ENCODE measurements at regions of chr1 and their contacts with region 1.

Region 1: DNA sequence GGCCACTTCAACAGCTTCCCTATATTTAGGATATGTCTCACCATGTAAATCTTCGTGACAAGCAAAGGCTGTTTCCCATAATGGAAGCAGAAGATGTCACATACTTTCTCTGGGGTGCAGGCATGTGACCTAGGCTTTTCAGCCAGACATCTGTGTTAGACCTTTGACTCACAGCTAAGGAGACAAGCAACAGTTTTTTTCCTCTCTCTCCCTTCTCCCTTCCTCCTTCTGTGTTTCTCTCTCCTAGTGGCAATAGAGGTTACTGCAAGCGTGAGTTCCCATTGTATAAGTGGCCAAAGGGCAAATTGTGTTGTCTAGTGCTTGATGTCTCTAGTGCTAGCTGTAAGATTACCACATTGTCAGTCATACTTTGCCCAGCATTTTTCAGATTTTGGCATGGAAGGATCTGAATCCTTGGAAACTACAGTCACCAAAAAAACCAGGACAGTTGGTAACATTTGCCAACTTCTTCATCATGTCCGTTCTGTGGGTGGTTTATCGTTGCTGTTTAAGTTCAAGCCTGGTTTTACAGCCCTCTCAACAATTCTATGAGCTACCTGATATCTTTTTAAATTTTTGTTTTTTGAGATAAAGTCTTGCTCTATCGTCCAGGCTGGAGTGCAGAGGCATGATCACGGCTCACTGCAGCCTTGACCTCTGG is 44.4 kb upstream of the RABGAP1L start:
- DNase-seq: peak; percentile 25
- H3K4me3 ChIP-seq: no peak overlapping the region; a peak in 1 of 4 replicates
- H3K27ac ChIP-seq: no peak overlapping the region
- H3K4me1 ChIP-seq: no peaks in the 10 kb centered on the region; a peak in 1 of 4 replicates
- H3K27me3 ChIP-seq: no peaks in the 10 kb centered on the region
- CTCF ChIP-seq: peak; percentile 69
- EP300 ChIP-seq: no peak
- RAD21 ChIP-seq: peak; percentile 18; the same call in 1 of the 2 replicates

Region 2: GRCh38 chr1:173768206-173768605 is 346.7 kb before region 1 on chr1:
- CTCF ChIA-PET with region 1: no interaction called
- POLR2A ChIA-PET with region 1: no interaction called
- DNase-seq: no peak
- H3K4me3 ChIP-seq: no peak overlapping the region
- H3K27ac ChIP-seq: no peak overlapping the region
- H3K4me1 ChIP-seq: no peaks in the 10 kb centered on the region
- H3K27me3 ChIP-seq: no peaks in the 10 kb centered on the region
- CTCF ChIP-seq: no peak
- EP300 ChIP-seq: no peak
- RAD21 ChIP-seq: no peak

Region 3: DNA sequence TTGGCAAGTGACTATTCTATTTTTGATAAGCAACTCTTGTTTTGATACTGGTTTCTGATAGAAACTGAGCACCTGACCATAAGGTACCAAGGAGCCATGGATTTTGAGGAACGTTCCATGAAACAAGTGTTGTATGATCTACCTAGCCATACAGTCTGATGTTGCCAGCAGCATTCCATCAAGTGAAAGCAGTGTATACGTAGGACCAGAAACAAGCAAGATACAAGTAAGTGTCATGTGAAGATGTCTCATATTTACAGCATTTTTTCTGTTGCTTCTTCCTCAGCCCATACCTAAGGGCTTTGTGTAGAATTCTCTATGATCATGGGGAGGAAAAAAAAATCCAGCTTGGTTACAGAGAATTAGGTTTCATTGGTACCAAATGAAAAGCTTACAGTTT is 11.2 kb before region 1 on chr1:
- CTCF ChIA-PET with region 1: interaction called, 11 read pairs
- POLR2A ChIA-PET with region 1: no interaction called
- DNase-seq: no peak
- H3K4me3 ChIP-seq: no peak overlapping the region
- H3K27ac ChIP-seq: no peak overlapping the region
- H3K4me1 ChIP-seq: no peaks in the 10 kb centered on the region
- H3K27me3 ChIP-seq: no peaks in the 10 kb centered on the region; the same call in 1 of the 2 replicates
- CTCF ChIP-seq: no peak
- EP300 ChIP-seq: no peak
- RAD21 ChIP-seq: no peak

Region 4: DNA sequence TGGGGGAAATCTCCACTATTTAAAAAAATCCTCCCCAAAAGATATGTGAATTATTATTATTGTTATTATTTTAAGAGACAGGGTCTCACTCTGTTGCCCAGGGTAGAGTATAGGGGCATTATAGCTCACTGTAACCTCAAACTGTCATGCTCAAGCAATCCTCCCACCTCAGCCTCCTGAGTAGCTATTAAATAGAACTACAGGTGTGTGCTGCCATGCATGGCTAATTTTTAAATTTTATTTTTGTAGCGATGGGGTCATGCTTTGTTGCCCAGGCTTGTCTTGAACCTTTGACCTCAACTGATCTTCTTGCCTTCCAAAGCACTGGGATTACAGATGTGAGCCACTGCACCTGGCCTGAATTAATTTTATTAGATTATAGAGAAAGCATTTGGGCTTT is 161.2 kb after region 1 on chr1:
- CTCF ChIA-PET with region 1: no interaction called
- POLR2A ChIA-PET with region 1: no interaction called
- DNase-seq: no peak
- H3K4me3 ChIP-seq: no peak overlapping the region
- H3K27ac ChIP-seq: no peak overlapping the region
- H3K4me1 ChIP-seq: no peaks in the 10 kb centered on the region
- H3K27me3 ChIP-seq: no peaks in the 10 kb centered on the region
- CTCF ChIP-seq: no peak
- EP300 ChIP-seq: no peak
- RAD21 ChIP-seq: no peak